ENCODE measurements at regions of chr7 and their contacts with region 1.

Region 1: DNA sequence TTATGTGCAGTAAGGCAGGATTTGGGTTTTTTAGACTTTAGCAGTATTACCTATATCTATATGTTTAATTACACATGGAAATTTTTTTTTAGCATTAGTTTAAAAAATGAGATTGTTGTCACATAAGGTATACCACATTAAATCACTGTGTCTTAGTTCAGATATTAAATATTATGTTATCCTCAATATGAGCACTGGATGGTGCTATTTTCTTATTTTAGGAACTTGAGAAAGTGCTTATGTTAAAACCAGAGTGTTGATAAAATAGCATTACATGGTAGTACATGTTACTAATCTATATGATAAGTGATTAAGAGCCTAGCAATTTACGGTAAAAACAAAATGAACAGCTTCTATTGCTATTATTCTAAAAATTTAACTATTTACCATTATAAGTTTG is 28.8 kb downstream of the MIOS start:
- DNase-seq: no peak

Region 2: DNA sequence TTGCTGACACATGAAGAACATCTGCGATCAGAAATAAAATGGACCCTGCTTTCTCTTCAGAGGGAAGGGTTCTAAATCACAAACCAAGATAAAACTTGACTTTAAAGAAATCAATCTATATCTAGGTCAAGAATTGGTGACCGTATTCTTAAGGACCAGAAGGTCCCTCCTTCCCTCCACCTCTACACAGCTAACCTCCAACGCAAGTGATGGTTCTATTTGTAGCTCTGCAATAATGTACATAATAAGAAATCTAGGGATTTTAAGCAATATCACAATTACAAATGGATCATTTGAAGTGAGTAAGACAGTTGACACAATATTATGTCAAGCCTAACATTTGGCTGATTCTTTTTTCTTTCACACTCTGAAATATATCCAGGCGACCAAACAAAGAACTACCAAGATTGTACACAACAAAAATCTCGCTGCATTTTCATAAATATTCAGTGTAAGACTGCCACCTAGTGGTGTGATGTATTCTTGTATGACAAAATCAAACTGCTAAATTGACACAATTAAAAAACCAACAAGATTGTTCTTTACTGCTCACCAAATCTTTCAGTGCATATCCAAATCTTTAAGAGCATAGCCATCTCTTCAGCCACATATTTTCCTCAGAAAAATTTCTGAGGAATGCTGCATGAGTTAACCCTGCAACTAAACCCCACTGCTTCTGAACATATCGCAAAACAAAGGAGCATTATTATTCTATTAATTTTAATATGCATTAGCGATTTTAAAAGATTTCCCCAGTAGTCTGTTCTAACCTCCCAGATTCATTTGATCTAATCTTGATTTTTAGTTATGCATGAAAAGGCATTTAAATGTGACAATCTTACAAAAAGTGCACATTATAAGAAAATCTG is 622.0 kb after region 1 on chr7:
- intact Hi-C with region 1: loop called (anchors 10 kb)
- DNase-seq: no peak

Region 3: DNA sequence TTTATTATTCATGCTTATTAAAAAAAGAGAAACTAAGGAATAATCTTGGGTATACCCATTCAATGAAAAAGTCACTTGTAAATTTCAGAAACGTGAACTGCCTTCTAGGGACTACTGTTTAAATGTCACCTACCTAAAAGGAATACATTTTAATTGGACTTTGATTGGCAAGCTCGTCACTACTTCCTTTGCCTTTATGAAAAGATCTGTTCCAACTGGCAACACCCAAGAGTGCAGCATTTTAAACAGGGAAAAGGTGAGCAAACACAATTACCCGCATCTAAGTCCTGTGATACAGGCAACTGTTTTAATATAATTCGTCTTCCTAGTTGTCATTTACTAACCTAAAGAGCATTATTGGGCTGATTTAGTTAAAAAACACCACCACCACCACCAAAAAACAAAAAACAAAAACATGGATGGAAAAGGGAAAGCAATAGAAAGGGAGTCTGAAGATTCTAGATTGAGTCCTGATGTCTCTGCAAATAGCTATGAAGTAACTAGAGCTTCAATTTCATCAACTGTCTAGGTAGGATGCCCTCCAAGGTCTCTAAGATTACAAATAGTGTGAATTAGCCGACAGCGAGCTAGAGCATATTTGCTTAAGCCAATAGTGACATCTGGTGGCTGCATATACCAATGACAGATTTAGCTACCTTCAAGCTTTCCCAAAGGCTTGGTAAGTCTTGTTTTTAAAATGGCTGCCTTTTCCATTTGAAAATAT is 700.3 kb after region 1 on chr7:
- intact Hi-C with region 1: loop called (anchors 5 kb)
- DNase-seq: no peak

Measured in cardiac septum (tissue), 1 donor.